ENCODE measurements at regions of chr7 and their contacts with region 1.

Region 1: DNA sequence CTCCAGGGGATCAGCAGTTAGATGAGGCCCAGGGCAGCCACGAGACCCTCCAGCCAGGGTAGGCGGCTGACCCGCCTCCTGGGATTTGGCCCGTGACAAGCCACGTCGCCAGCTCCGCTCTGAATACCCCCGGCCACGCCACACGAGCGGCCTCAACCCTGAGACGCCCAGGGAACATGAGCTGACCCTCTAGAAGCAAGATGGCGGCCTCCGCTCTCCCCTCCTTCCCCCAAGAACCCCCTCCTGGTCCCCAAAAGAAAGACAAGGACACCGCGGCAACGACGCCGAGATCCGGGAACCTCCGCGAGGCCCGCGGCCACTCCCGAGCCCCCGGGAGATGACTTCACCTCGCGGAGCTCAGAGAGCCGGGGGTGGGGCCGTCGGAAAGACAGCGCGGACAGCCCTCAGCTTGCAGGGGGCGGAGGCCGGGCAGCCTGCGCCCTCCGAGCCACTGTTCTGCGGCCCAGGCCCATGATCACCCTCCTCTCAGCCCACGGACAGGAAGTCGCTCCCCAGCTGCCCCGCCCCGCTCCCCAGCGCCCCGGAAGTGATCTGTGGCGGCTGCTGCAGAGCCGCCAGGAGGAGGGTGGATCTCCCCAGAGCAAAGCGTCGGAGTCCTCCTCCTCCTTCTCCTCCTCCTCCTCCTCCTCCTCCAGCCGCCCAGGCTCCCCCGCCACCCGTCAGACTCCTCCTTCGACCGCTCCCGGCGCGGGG is at the start of gene RALA:
- DNase-seq: peak; percentile 84 to 93 (median 87)
- ATAC-seq: peak; percentile 90 to 95
- H3K4me3 Mint-ChIP-seq: peak within 1 kb of the TSS; percentile 89 to 99 (median 96)
- H3K27ac Mint-ChIP-seq: peak within 1 kb of the TSS; percentile 94 to 99 (median 95)
- H3K4me1 Mint-ChIP-seq: peaks cover 28 to 55% (median 52%) of the 10 kb centered on the region in 4 donors
- H3K27me3 Mint-ChIP-seq: no peaks in the 10 kb centered on the region
- polyA plus RNA-seq, gene RALA: 46.6 to 55.1 (median 48.2) TPM

Region 2: GRCh38 chr7:39609113-39609934 is 13.9 kb before region 1 on chr7:
- POLR2A ChIA-PET with region 1: interaction called, 17 read pairs
- DNase-seq: peak in 4 of 10 donors; percentile 19 to 29 (median 25)
- ATAC-seq: peak; percentile 81 to 86
- H3K4me3 Mint-ChIP-seq: peak overlapping the region; percentile 10 to 83 (median 72)
- H3K27ac Mint-ChIP-seq: peak overlapping the region in 8 of 10 donors; percentile 12 to 89 (median 75)
- H3K4me1 Mint-ChIP-seq: peaks cover 22 to 49% (median 40%) of the 10 kb centered on the region in 4 donors
- H3K27me3 Mint-ChIP-seq: peaks cover 7 to 33% (median 20%) of the 10 kb centered on the region in 5 donors

Region 3: DNA sequence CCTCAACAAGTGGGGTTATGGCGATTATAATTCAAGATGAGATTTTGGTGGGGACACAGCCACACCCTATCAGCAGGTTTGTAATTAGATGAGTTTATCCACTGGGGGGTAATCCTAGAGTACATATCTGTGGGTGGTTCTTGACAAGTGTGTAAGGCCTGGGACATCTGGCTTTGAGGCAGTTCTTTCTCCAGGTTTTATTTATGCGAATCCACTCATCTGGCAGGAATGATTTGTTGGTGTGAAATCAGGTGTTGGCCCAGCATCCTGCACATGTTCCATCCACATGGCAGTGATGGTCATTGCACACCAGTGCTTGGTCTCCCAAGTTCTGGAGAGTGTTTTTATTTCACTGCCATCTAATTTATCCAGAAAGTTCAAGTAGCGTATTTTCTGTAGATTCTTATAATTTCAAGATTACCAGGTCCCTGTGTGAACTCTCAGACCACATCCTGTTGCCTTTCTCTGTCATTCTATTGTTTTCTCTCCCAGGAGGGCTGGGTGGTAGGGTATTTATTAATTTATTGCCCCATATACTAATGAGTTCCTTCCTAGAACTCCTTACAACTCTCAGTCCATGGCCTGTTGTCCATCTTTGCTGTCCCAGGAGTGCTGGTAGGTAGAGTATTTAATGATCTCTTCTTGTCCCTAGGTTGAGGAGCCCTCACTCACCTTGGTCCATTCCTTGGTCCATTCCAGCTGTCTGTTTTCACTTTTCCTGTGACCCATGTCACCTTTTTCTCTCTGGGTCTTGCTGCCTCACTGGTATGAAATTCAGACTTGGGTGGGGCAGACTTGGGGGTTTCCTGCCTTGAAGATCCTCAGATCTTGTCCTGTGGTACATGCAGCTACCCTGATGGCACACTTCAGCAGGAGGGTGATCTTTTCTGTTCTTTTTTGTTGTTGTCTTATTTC is 10.6 kb after region 1 on chr7:
- POLR2A ChIA-PET with region 1: interaction called, 17 read pairs
- DNase-seq: peak in 9 of 10 donors; percentile 38 to 81 (median 61)
- ATAC-seq: peak; percentile 96 to 98
- H3K4me3 Mint-ChIP-seq: peak overlapping the region; percentile 58 to 84 (median 80)
- H3K27ac Mint-ChIP-seq: peak overlapping the region; percentile 92 to 99 (median 97)
- H3K4me1 Mint-ChIP-seq: peaks cover 37 to 90% (median 81%) of the 10 kb centered on the region in 4 donors
- H3K27me3 Mint-ChIP-seq: no peaks in the 10 kb centered on the region

Region 4: GRCh38 chr7:39683216-39683845 is 60.2 kb after region 1 on chr7:
- POLR2A ChIA-PET with region 1: no interaction called
- DNase-seq: no peak
- ATAC-seq: no peak
- H3K4me3 Mint-ChIP-seq: no peak overlapping the region
- H3K27ac Mint-ChIP-seq: peak overlapping the region in 7 of 10 donors; percentile 9 to 68 (median 54)
- H3K4me1 Mint-ChIP-seq: peaks cover 22 to 59% (median 49%) of the 10 kb centered on the region in 4 donors
- H3K27me3 Mint-ChIP-seq: no peaks in the 10 kb centered on the region

Region 5: GRCh38 chr7:39732837-39733804 is 109.9 kb after region 1 on chr7:
- POLR2A ChIA-PET with region 1: interaction called, 38 read pairs
- DNase-seq: peak; percentile 84 to 97 (median 94)
- ATAC-seq: peak; percentile 90 to 92
- H3K4me3 Mint-ChIP-seq: peak overlapping the region; percentile 89 to 98 (median 94)
- H3K27ac Mint-ChIP-seq: peak overlapping the region; percentile 89 to 98 (median 97)
- H3K4me1 Mint-ChIP-seq: peaks cover 19 to 54% (median 50%) of the 10 kb centered on the region in 4 donors
- H3K27me3 Mint-ChIP-seq: no peaks in the 10 kb centered on the region